ENCODE measurements at regions of chr2 and their contacts with region 1.

Region 1: GRCh38 chr2:179440642-179441251 is 176.1 kb upstream of the SESTD1 start:
- DNase-seq: no peak
- H3K4me3 Mint-ChIP-seq: no peak overlapping the region
- H3K27ac Mint-ChIP-seq: no peak overlapping the region
- H3K4me1 Mint-ChIP-seq: no peaks in the 10 kb centered on the region
- H3K27me3 Mint-ChIP-seq: peaks cover 11% of the 10 kb centered on the region

Region 2: GRCh38 chr2:179422037-179422643 is 18.6 kb before region 1 on chr2:
- CTCF ChIA-PET with region 1: interaction called, 13 read pairs
- POLR2A ChIA-PET with region 1: no interaction called
- DNase-seq: peak; percentile 51
- H3K4me3 Mint-ChIP-seq: no peak overlapping the region
- H3K27ac Mint-ChIP-seq: no peak overlapping the region
- H3K4me1 Mint-ChIP-seq: no peaks in the 10 kb centered on the region
- H3K27me3 Mint-ChIP-seq: peaks cover 11% of the 10 kb centered on the region